Natural killer cell (primary cell): ENCODE measurements at regions of chr13 and their contacts with region 1.

Region 1: GRCh38 chr13:48595431-48596429 is 58.0 kb upstream of the CYSLTR2 start:
- DNase-seq: peak; percentile 31 to 84
- ATAC-seq: peak; percentile 86 to 98 (median 97)
- H3K4me3 ChIP-seq: no peak overlapping the region
- H3K4me3 Mint-ChIP-seq: no peak overlapping the region
- H3K27ac ChIP-seq: no peak overlapping the region
- H3K27ac Mint-ChIP-seq: no peak overlapping the region
- H3K4me1 ChIP-seq: no peaks in the 10 kb centered on the region
- H3K4me1 Mint-ChIP-seq: no peaks in the 10 kb centered on the region
- H3K27me3 ChIP-seq: no peaks in the 10 kb centered on the region
- H3K27me3 Mint-ChIP-seq: no peaks in the 10 kb centered on the region
- CTCF ChIP-seq: peak; percentile 67

Region 2: GRCh38 chr13:48731957-48732569 is 136.3 kb after region 1 on chr13:
- intact Hi-C with region 1: loop called (anchors 1 kb)
- DNase-seq: peak; percentile 51 to 78
- ATAC-seq: peak; percentile 84 to 98 (median 92)
- H3K4me3 ChIP-seq: no peak overlapping the region
- H3K4me3 Mint-ChIP-seq: peak overlapping the region; percentile 81
- H3K27ac ChIP-seq: no peak overlapping the region
- H3K27ac Mint-ChIP-seq: peak overlapping the region in 1 of 2 donors; percentile 39
- H3K4me1 ChIP-seq: peaks cover 4% of the 10 kb centered on the region
- H3K4me1 Mint-ChIP-seq: peaks cover 9 to 10% of the 10 kb centered on the region in 2 donors
- H3K27me3 ChIP-seq: no peaks in the 10 kb centered on the region
- H3K27me3 Mint-ChIP-seq: peaks cover 0 to 6% of the 10 kb centered on the region in 2 donors
- CTCF ChIP-seq: peak; percentile 82

Region 3: GRCh38 chr13:48769107-48769704 is 173.5 kb after region 1 on chr13:
- intact Hi-C with region 1: loop called (anchors 1 kb)
- DNase-seq: peak; percentile 68 to 92
- ATAC-seq: peak; percentile 100
- H3K4me3 ChIP-seq: no peak overlapping the region
- H3K4me3 Mint-ChIP-seq: no peak overlapping the region
- H3K27ac ChIP-seq: no peak overlapping the region
- H3K27ac Mint-ChIP-seq: no peak overlapping the region
- H3K4me1 ChIP-seq: no peaks in the 10 kb centered on the region
- H3K4me1 Mint-ChIP-seq: peaks cover 6 to 8% of the 10 kb centered on the region in 2 donors
- H3K27me3 ChIP-seq: peaks cover 4% of the 10 kb centered on the region
- H3K27me3 Mint-ChIP-seq: peaks cover 21 to 44% of the 10 kb centered on the region in 2 donors
- CTCF ChIP-seq: peak; percentile 100

Region 4: GRCh38 chr13:50081679-50082425 is 1486.1 kb after region 1 on chr13:
- intact Hi-C with region 1: no loop called
- DNase-seq: peak; percentile 97 to 100
- ATAC-seq: peak; percentile 71 to 90 (median 79)
- H3K4me3 ChIP-seq: peak overlapping the region; percentile 79
- H3K4me3 Mint-ChIP-seq: peak overlapping the region; percentile 99
- H3K27ac ChIP-seq: peak overlapping the region; percentile 93
- H3K27ac Mint-ChIP-seq: peak overlapping the region; percentile 96 to 97
- H3K4me1 ChIP-seq: peaks cover 12% of the 10 kb centered on the region
- H3K4me1 Mint-ChIP-seq: peaks cover 44 to 56% of the 10 kb centered on the region in 2 donors
- H3K27me3 ChIP-seq: peaks cover 2% of the 10 kb centered on the region
- H3K27me3 Mint-ChIP-seq: peaks cover 0 to 3% of the 10 kb centered on the region in 2 donors
- CTCF ChIP-seq: no peak